Panc1 (cell line): ENCODE measurements at regions of chr11 and their contacts with region 1.

Region 1: GRCh38 chr11:118883368-118884071 is at the start of gene CXCR5:
- DNase-seq: no peak
- ATAC-seq: no peak
- H3K4me3 ChIP-seq: no peak within 1 kb of the TSS
- H3K27ac ChIP-seq: no peak within 1 kb of the TSS
- H3K4me1 ChIP-seq: peaks cover 9% of the 10 kb centered on the region
- H3K27me3 ChIP-seq: no peaks in the 10 kb centered on the region
- CTCF ChIP-seq: no peak
- total RNA-seq, gene CXCR5: not detected

Region 2: GRCh38 chr11:118845369-118845768 is 38.2 kb before region 1 on chr11:
- CTCF ChIA-PET with region 1: no interaction called
- POLR2A ChIA-PET with region 1: interaction called, 11 read pairs
- in situ Hi-C with region 1: no loop called
- intact Hi-C with region 1: no loop called
- DNase-seq: no peak
- ATAC-seq: no peak
- H3K4me3 ChIP-seq: no peak overlapping the region
- H3K27ac ChIP-seq: no peak overlapping the region
- H3K4me1 ChIP-seq: no peaks in the 10 kb centered on the region
- H3K27me3 ChIP-seq: no peaks in the 10 kb centered on the region; the same call in 1 of the 2 replicates
- CTCF ChIP-seq: no peak